Activated CD4-positive, alpha-beta T cell treated with anti-CD3 and anti-CD28 coated beads, Interleukin-2, amount 10 ng/mL, durations not matched to agents 7 days and 5 days (primary cell): ENCODE measurements at regions of chr13 and their contacts with region 1.

Region 1: DNA sequence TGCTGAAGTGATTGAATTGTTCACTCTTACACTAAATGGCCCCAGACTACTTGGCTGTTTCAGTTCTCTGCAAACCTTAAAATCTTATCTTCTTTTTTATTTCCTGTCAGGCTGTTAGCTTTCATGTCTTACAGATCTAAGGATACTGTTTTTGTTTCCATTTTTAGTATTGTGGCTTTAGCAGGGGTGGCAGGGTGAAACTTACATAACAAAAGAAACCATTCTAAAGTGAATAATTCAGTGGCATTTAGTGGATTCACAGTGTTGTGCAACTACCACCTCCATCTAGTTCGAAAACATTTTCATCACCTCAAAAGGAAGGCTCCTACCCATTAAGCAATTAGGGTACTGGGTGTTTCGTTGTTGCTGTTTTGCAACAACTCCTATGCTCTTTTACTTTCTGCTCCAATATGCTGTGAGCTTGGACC is 19.8 kb downstream of the TMEM272 start:
- DNase-seq: peak; percentile 54
- H3K4me3 Mint-ChIP-seq: peak overlapping the region; percentile 65
- H3K27ac Mint-ChIP-seq: peak overlapping the region; percentile 97
- H3K4me1 Mint-ChIP-seq: peaks cover 97% of the 10 kb centered on the region
- H3K27me3 Mint-ChIP-seq: no peaks in the 10 kb centered on the region

Region 2: GRCh38 chr13:51814825-51815650 is 10.1 kb before region 1 on chr13:
- CTCF ChIA-PET with region 1: interaction called, 41 read pairs
- POLR2A ChIA-PET with region 1: no interaction called
- DNase-seq: peak; percentile 83
- H3K4me3 Mint-ChIP-seq: peak overlapping the region; percentile 1
- H3K27ac Mint-ChIP-seq: peak overlapping the region; percentile 82
- H3K4me1 Mint-ChIP-seq: peaks cover 65% of the 10 kb centered on the region
- H3K27me3 Mint-ChIP-seq: no peaks in the 10 kb centered on the region

Region 3: GRCh38 chr13:51995677-51996551 is 170.7 kb after region 1 on chr13:
- CTCF ChIA-PET with region 1: no interaction called
- POLR2A ChIA-PET with region 1: no interaction called
- DNase-seq: no peak
- H3K4me3 Mint-ChIP-seq: no peak overlapping the region
- H3K27ac Mint-ChIP-seq: no peak overlapping the region
- H3K4me1 Mint-ChIP-seq: peaks cover 11% of the 10 kb centered on the region
- H3K27me3 Mint-ChIP-seq: peaks cover 10% of the 10 kb centered on the region